MCF 10A (cell line): ENCODE measurements at regions of chr20 and their contacts with region 1.

Region 1: GRCh38 chr20:9359561-9360308 is 154.7 kb upstream of the LAMP5 start:
- DNase-seq: peak; percentile 62
- H3K4me3 Mint-ChIP-seq: no peak overlapping the region
- H3K27ac Mint-ChIP-seq: no peak overlapping the region
- H3K4me1 Mint-ChIP-seq: no peaks in the 10 kb centered on the region
- H3K27me3 Mint-ChIP-seq: no peaks in the 10 kb centered on the region
- CTCF ChIP-seq: peak; percentile 51

Region 2: DNA sequence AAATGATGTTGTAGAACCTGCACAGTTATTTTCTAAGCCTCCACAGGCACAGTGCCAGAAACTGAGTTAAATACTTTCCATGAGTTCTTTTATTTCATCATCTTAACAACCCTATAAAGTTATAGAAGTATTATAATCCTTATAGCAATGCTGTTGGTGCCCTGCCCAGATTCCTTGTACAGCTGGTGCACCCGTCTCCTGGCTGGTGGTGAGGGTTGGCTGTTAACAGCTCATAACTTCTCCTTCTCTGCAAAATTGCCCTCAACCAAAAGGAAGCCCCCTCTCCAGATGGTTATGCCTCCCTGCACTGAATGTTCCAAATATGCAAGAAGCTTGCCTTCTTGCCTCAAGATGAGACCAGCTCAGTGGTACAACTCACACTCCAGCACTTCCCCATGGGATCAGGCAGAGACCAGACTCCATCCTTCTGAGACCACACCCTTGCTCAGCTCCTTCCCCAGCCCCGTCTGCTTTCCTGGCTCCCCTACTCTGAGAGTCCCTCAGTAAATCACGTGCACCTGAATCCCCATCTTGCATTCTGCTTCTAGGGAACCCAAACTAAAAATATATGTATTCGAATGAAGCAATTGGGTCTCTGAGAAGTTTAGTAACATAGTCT is 595.3 kb before region 1 on chr20:
- CTCF ChIA-PET with region 1: interaction called, 10 read pairs
- POLR2A ChIA-PET with region 1: interaction called, 6 read pairs
- intact Hi-C with region 1: loop called (anchors 1 kb)
- DNase-seq: peak; percentile 67
- H3K4me3 Mint-ChIP-seq: no peak overlapping the region
- H3K27ac Mint-ChIP-seq: no peak overlapping the region
- H3K4me1 Mint-ChIP-seq: peaks cover 7% of the 10 kb centered on the region
- H3K27me3 Mint-ChIP-seq: no peaks in the 10 kb centered on the region
- CTCF ChIP-seq: no peak

Region 3: GRCh38 chr20:8842525-8842924 is 517.2 kb before region 1 on chr20:
- CTCF ChIA-PET with region 1: interaction called, 11 read pairs
- POLR2A ChIA-PET with region 1: no interaction called
- intact Hi-C with region 1: no loop called
- DNase-seq: no peak
- H3K4me3 Mint-ChIP-seq: no peak overlapping the region
- H3K27ac Mint-ChIP-seq: no peak overlapping the region
- H3K4me1 Mint-ChIP-seq: no peaks in the 10 kb centered on the region
- H3K27me3 Mint-ChIP-seq: no peaks in the 10 kb centered on the region
- CTCF ChIP-seq: no peak

Region 4: DNA sequence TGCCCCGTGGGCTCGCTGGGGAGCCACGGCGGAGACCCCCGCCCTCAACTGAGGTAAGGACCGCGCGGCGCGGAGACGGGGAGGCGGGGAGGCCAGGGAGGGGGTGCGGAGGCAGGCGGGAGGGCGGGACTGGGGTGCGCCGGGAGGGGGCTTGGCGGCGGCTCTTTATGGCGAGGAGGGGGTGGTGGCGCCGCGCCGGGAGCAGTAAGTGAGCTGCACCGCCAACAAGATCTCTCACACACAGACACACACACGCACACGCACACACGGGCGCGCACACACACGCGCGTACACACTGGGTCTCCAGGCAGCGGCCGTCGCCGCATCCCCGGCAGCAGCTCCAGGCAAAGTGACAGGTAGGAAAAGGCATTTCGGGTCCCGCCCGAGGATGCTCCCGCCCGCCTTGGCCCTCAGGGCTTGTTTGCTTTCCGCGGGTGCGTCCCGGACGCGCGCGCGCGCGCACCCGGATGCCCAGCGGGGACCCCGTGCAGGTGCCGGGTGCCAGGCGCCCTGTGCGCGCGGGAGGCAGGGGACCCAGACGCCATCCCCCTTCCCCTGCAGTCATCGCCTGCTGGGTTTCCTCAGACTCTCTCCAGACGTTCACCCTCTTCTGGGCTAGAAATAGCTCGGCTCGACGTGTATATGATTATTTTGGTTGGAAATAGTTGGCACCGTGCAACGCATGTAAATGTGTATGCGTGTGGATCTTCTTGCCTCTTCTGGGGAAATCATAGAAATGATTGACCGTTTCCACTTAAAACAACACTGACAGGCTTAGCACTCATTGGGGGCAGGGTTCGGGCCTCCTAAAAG is 290.7 kb before region 1 on chr20 and contains the start of gene PLCB4:
- CTCF ChIA-PET with region 1: interaction called, 10 read pairs
- POLR2A ChIA-PET with region 1: no interaction called
- intact Hi-C with region 1: no loop called
- DNase-seq: peak; percentile 55
- H3K4me3 Mint-ChIP-seq: peak within 1 kb of the TSS; percentile 82
- H3K27ac Mint-ChIP-seq: no peak within 1 kb of the TSS
- H3K4me1 Mint-ChIP-seq: peaks cover 6% of the 10 kb centered on the region
- H3K27me3 Mint-ChIP-seq: no peaks in the 10 kb centered on the region
- CTCF ChIP-seq: no peak
- total RNA-seq, gene PLCB4: 0.22 and 0.91 TPM in 2 replicates

Region 5: GRCh38 chr20:9301129-9302090 is 58.3 kb before region 1 on chr20:
- CTCF ChIA-PET with region 1: no interaction called
- POLR2A ChIA-PET with region 1: no interaction called
- intact Hi-C with region 1: no loop called
- DNase-seq: peak; percentile 85
- H3K4me3 Mint-ChIP-seq: no peak overlapping the region
- H3K27ac Mint-ChIP-seq: peak overlapping the region; percentile 36
- H3K4me1 Mint-ChIP-seq: peaks cover 29% of the 10 kb centered on the region
- H3K27me3 Mint-ChIP-seq: no peaks in the 10 kb centered on the region
- CTCF ChIP-seq: no peak

Region 6: GRCh38 chr20:9330151-9330550 is 29.6 kb before region 1 on chr20:
- CTCF ChIA-PET with region 1: interaction called, 12 read pairs
- POLR2A ChIA-PET with region 1: no interaction called
- intact Hi-C with region 1: no loop called
- DNase-seq: no peak
- H3K4me3 Mint-ChIP-seq: no peak overlapping the region
- H3K27ac Mint-ChIP-seq: no peak overlapping the region
- H3K4me1 Mint-ChIP-seq: no peaks in the 10 kb centered on the region
- H3K27me3 Mint-ChIP-seq: no peaks in the 10 kb centered on the region
- CTCF ChIP-seq: no peak

Region 7: DNA sequence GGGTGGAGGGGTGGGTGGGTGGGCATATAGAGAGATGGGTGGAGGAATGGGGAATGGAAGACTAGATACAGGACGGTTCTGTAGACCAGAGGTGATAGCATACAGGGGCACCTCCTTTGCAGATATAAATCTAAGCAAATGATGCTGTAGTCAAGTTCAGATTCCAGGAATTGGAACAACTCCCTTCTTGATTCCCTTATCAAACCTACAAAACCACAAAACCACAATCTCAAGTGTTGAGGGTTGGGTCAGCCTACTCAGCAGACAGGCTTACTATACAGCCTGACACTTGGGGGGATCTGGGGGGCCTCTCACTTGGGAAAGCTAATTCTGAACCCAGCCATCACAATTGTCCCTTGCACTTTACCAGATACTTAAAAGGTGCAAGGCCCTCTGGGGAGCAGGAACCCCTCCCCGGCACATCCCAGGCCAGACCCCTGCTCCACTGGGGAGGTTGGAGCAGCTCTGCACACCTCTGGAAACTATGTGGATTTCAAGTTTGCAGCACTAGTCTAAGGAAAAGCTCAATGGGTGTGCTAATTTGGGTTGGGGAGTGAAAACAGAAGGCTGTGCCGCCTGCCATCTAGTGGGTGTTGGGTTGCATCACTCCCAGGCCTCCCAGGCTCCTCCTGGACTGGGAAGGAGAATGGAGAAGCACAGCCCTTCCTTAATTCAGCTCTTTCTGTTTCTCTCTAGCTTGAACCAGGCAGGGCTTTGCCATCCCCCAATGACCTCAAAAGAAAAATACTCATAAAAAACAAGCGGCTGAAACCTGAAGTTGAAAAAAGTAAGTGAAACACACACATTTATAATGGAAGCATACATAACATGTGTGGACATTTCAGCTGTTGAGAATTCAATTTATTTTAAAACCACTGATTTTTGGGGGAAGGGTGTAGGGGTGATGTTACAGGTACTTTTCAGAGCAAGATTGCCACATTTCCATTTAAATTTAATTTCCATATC is 33.4 kb after region 1 on chr20:
- CTCF ChIA-PET with region 1: interaction called, 21 read pairs
- POLR2A ChIA-PET with region 1: no interaction called
- intact Hi-C with region 1: no loop called
- DNase-seq: peak; percentile 76
- H3K4me3 Mint-ChIP-seq: no peak overlapping the region
- H3K27ac Mint-ChIP-seq: no peak overlapping the region
- H3K4me1 Mint-ChIP-seq: no peaks in the 10 kb centered on the region
- H3K27me3 Mint-ChIP-seq: no peaks in the 10 kb centered on the region
- CTCF ChIP-seq: peak; percentile 71

Region 8: DNA sequence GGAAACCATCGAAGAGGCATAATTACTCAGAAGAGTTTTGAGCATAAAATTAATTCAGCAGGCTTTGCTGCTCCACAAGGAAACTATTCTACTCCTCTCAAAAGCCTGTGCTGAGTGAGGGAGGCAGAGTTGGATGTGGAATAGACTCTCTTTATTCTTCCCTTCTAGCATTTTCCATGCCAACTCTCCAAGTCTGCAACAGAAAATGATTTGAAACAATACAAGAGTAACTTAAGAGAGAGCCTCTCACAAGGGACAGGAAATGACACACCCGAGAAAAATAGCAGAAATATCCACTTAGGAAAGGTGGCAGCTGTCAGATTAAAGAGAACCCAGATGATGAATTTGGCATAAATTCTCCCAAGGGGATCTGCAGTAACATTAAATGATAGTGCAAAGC is 128.3 kb after region 1 on chr20:
- CTCF ChIA-PET with region 1: no interaction called
- POLR2A ChIA-PET with region 1: no interaction called
- intact Hi-C with region 1: no loop called
- DNase-seq: no peak
- H3K4me3 Mint-ChIP-seq: no peak overlapping the region
- H3K27ac Mint-ChIP-seq: no peak overlapping the region
- H3K4me1 Mint-ChIP-seq: no peaks in the 10 kb centered on the region
- H3K27me3 Mint-ChIP-seq: peaks cover 1% of the 10 kb centered on the region
- CTCF ChIP-seq: no peak

Region 9: DNA sequence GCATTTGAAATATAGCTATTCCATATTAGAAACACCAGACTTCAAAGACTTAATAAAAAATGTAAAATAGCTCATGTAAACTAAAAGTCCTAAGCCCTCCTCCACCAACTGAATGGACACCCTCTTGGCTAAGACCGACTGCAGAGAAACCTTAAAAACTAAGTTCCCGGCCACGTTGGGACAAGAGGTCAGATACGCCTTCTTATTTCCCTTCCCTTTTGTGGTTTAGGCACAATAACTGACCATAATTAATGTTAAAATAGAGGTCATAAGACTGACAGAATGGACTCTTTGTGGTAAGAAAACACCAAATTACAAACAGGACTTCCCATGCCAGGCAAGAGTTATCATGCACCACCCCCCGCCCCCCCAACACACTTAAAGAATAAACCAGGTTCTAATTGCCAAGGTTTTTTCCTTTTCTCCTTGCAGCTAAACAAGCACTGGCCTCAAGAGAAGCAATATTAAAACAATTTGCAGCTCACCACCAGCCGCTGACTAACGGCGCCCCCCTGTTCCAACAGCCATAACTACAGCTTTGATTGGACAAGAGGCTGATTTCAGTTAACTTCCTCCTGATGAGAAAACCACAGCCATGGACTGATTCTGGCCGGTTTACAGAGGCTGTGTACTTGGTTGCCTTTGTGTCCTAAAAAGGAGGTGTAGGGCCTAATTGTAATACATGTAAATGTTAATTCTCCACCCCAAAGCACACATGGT is 144.0 kb after region 1 on chr20:
- CTCF ChIA-PET with region 1: no interaction called
- POLR2A ChIA-PET with region 1: no interaction called
- intact Hi-C with region 1: no loop called
- DNase-seq: peak; percentile 25
- H3K4me3 Mint-ChIP-seq: no peak overlapping the region
- H3K27ac Mint-ChIP-seq: no peak overlapping the region
- H3K4me1 Mint-ChIP-seq: no peaks in the 10 kb centered on the region
- H3K27me3 Mint-ChIP-seq: no peaks in the 10 kb centered on the region
- CTCF ChIP-seq: no peak